WTC11 (cell line): ENCODE measurements at regions of chr14 and their contacts with region 1.

Region 1: GRCh38 chr14:66939409-66939808 is 249.8 kb upstream of the GARIN2 start:
- DNase-seq: no peak
- ATAC-seq: peak; percentile 51
- H3K4me3 Mint-ChIP-seq: no peak overlapping the region
- H3K27ac Mint-ChIP-seq: no peak overlapping the region
- H3K4me1 Mint-ChIP-seq: peaks cover 4% of the 10 kb centered on the region
- H3K27me3 Mint-ChIP-seq: peaks cover under 1% of the 10 kb centered on the region; the same call in 1 of the 2 replicates
- CTCF ChIP-seq: no peak

Region 2: DNA sequence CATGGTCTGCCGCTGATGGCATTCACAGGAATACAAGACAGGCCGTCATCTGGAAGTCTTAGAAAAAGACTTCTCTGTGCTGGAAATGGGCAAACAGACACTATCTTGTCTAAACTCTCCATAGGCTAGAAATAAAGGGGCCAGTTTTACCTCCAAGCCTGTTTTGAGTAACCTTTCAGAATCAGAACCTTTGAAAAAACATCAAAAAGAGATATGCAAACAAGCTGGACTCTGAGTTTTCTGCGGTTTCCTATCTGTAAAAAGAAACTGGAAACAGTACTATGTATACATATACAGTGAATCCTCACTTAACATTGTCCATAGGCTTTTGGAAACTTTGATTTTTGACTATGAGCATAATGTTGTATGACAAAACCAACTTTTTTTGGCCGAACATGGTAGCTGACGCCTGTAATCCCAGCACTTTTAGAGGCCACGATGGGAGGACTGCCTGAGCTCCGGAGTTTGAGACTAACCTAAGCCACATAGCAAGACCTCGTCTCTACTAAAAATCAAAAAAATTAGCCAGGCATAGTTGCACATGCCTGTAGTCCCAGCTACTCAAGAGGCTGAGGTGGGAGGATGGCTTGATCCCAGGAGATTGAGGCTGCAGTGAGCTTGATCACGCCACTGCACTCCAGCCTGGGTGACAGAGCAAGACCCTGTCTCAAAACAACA is 1744.2 kb before region 1 on chr14:
- CTCF ChIA-PET with region 1: no interaction called
- POLR2A ChIA-PET with region 1: interaction called, 13 read pairs
- DNase-seq: no peak
- ATAC-seq: no peak
- H3K4me3 Mint-ChIP-seq: no peak overlapping the region
- H3K27ac Mint-ChIP-seq: no peak overlapping the region
- H3K4me1 Mint-ChIP-seq: no peaks in the 10 kb centered on the region
- H3K27me3 Mint-ChIP-seq: peaks cover 7% of the 10 kb centered on the region; the same call in 1 of the 2 replicates
- CTCF ChIP-seq: no peak